ENCODE measurements at regions of chr19 and their contacts with region 1.

Region 1: DNA sequence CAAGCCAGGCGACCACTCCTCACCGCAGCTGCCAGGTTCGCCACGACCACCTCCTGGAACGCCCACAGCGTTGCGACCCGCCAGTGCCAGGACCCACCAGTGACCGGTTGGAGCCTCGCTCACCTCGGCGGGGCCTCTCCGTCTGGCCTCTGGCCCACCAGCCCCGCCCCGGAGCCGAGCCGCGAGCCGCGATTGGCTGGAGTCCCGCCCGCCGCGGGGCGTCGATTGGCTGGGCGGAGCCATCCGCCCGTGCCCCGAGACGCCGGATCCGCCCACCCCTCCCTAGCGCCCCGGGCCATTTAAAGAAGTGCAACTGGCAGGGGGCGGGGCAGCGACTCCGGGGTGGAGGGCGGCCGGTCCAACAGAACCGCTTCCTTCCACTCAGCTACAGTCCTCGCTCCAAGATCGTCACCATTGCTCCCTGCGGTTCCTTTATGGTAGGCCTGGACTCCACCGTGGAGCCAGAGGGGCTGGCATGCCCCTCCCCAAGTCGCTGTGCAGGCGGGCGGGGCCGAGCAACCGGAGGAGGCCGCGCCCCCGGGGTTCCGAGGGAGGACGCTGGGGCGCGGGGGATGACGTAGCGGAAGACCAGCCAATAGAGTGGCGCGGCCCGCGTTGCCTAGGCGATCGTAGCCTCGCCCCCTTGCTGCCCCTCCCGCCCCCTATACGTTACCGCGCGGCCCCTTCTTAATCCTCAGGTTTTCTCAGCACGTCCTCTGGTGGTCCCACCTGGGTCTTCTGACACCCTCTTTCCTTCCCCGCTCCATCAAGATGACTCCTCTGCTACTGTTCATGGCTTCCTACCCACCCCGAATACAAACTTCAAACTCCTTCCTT is at the start of gene SERTAD3:
- DNase-seq: peak; percentile 98
- ATAC-seq: peak; percentile 70
- H3K4me3 Mint-ChIP-seq: peak within 1 kb of the TSS; percentile 96
- H3K27ac Mint-ChIP-seq: peak within 1 kb of the TSS; percentile 96
- H3K4me1 Mint-ChIP-seq: peaks cover 16% of the 10 kb centered on the region
- H3K27me3 Mint-ChIP-seq: no peaks in the 10 kb centered on the region
- total RNA-seq, gene SERTAD3: 8.4 to 12.0 TPM

Region 2: GRCh38 chr19:39390755-39391592 is 1053.4 kb before region 1 on chr19 and contains the starts of genes MED29 and PAF1:
- CTCF ChIA-PET with region 1: no interaction called
- POLR2A ChIA-PET with region 1: no interaction called
- intact Hi-C with region 1: loop called in 1 of 2 experiments (anchors 2 kb)
- DNase-seq: peak; percentile 98
- ATAC-seq: peak; percentile 97
- H3K4me3 Mint-ChIP-seq: peak within 1 kb of the TSS; percentile 99
- H3K27ac Mint-ChIP-seq: peak within 1 kb of the TSS; percentile 98
- H3K4me1 Mint-ChIP-seq: peaks cover 28% of the 10 kb centered on the region
- H3K27me3 Mint-ChIP-seq: no peaks in the 10 kb centered on the region
- total RNA-seq, gene MED29: 24.0 to 34.6 TPM
- total RNA-seq, gene PAF1: 40.4 to 54.2 TPM

Region 3: DNA sequence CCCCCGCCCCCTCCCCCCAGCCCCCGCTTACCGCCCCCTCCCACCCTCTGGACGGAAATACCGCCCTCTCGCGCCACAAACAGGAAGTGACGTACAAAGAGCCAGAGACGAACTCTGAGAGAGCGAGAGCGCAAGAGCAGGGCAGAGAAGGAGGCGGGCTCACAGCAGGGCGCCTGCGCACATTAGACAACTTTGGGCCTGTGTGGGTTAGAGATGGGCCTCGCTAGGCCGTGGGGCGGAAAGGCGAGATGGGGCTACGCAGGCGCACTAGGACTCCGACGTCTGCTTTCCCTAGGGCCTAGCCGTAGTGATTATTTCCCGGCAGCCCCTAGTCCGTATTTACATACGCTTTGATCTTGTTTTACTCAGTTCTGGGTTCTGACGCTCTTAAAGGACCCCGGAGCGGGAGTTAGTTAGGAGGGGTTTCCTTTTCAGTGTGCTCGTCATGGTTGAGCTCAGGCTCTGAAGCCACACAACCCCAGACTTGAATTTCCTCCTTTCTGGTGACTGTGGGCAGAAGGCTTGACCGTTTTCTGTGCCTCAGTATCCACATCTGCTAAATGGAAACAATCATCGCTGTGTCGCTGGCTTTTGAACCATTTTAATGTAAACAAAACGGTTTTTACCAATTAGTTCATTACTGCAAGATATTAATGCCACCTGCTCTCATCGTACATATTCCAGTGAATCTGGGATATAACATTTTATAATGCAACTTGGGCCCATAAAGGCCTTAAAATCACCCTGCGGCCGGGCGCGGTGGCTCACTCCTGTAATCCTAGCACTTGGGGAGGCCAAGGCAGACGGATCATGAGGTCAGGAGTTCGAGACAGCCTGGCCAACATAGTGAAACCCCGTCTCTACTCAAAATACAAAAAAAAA is 158.8 kb before region 1 on chr19:
- CTCF ChIA-PET with region 1: interaction called, 3 read pairs
- POLR2A ChIA-PET with region 1: interaction called, 5 read pairs
- intact Hi-C with region 1: loop called (anchors 1 kb)
- DNase-seq: peak; percentile 98
- ATAC-seq: peak; percentile 89
- H3K4me3 Mint-ChIP-seq: peak overlapping the region; percentile 95
- H3K27ac Mint-ChIP-seq: peak overlapping the region; percentile 99
- H3K4me1 Mint-ChIP-seq: peaks cover 42% of the 10 kb centered on the region
- H3K27me3 Mint-ChIP-seq: no peaks in the 10 kb centered on the region

Region 4: GRCh38 chr19:40341601-40342482 is 102.6 kb before region 1 on chr19:
- CTCF ChIA-PET with region 1: no interaction called
- POLR2A ChIA-PET with region 1: no interaction called
- intact Hi-C with region 1: no loop called
- DNase-seq: no peak
- ATAC-seq: no peak
- H3K4me3 Mint-ChIP-seq: no peak overlapping the region
- H3K27ac Mint-ChIP-seq: no peak overlapping the region
- H3K4me1 Mint-ChIP-seq: peaks cover 3% of the 10 kb centered on the region
- H3K27me3 Mint-ChIP-seq: no peaks in the 10 kb centered on the region

Region 5: GRCh38 chr19:40433391-40434216 is 10.8 kb before region 1 on chr19:
- CTCF ChIA-PET with region 1: interaction called, 8 read pairs
- POLR2A ChIA-PET with region 1: interaction called, 8 read pairs
- intact Hi-C with region 1: loop called in 1 of 2 experiments (anchors 1 kb)
- DNase-seq: peak; percentile 74
- ATAC-seq: peak; percentile 86
- H3K4me3 Mint-ChIP-seq: peak overlapping the region; percentile 75
- H3K27ac Mint-ChIP-seq: peak overlapping the region; percentile 96
- H3K4me1 Mint-ChIP-seq: peaks cover 15% of the 10 kb centered on the region
- H3K27me3 Mint-ChIP-seq: no peaks in the 10 kb centered on the region

Region 6: DNA sequence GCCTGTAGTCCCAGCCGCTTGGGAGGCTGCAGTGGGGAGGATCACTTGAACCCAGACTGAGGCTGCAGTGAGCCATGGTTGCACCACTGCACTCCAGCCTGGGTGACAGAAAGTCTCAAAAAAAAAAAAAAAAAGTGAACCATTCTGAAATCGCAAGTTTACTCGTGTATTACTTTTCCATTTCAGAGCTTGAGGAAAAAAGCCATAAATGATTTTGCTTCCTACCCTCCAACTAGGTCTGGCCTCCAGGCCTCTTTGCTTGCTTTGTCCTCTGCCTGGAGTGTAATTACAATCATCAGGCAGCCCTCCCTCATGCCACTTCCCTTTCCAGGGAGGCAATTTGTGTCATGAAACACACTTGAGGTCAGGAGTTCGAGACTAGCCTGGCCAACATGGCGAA is 12.6 kb after region 1 on chr19:
- CTCF ChIA-PET with region 1: no interaction called
- POLR2A ChIA-PET with region 1: no interaction called
- intact Hi-C with region 1: no loop called
- DNase-seq: no peak
- ATAC-seq: no peak
- H3K4me3 Mint-ChIP-seq: no peak overlapping the region
- H3K27ac Mint-ChIP-seq: no peak overlapping the region
- H3K4me1 Mint-ChIP-seq: no peaks in the 10 kb centered on the region
- H3K27me3 Mint-ChIP-seq: no peaks in the 10 kb centered on the region

Region 7: DNA sequence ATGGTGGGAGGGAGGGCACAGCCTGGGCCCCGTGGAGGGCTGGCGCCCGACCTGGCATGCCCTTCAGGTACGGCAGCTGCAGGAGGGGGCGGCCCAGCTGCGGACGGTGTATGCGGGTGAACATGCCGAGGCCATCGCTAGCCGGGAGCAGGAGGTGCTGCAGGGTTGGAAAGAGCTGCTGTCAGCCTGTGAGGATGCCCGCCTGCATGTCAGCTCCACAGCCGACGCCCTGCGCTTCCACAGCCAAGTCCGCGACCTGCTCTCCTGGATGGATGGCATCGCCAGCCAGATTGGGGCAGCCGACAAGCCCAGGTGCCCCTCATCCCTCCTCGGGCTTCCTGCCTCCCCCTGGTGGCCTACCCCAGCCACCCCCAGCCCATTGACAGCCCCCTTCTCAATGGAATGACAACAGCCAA is 115.7 kb after region 1 on chr19:
- CTCF ChIA-PET with region 1: no interaction called
- POLR2A ChIA-PET with region 1: no interaction called
- intact Hi-C with region 1: no loop called
- DNase-seq: no peak
- ATAC-seq: no peak
- H3K4me3 Mint-ChIP-seq: no peak overlapping the region
- H3K27ac Mint-ChIP-seq: no peak overlapping the region
- H3K4me1 Mint-ChIP-seq: no peaks in the 10 kb centered on the region
- H3K27me3 Mint-ChIP-seq: peaks cover 22% of the 10 kb centered on the region

Region 8: GRCh38 chr19:40603389-40604135 is 159.2 kb after region 1 on chr19:
- CTCF ChIA-PET with region 1: interaction called, 3 read pairs
- POLR2A ChIA-PET with region 1: no interaction called
- intact Hi-C with region 1: loop called in 1 of 2 experiments (anchors 1 kb)
- DNase-seq: peak; percentile 99
- ATAC-seq: peak; percentile 80
- H3K4me3 Mint-ChIP-seq: peak overlapping the region; percentile 52
- H3K27ac Mint-ChIP-seq: no peak overlapping the region
- H3K4me1 Mint-ChIP-seq: peaks cover 66% of the 10 kb centered on the region
- H3K27me3 Mint-ChIP-seq: peaks cover 22% of the 10 kb centered on the region

Region 9: GRCh38 chr19:40716655-40717324 is 272.4 kb after region 1 on chr19 and contains the starts of genes COQ8B and ITPKC:
- CTCF ChIA-PET with region 1: no interaction called
- POLR2A ChIA-PET with region 1: no interaction called
- intact Hi-C with region 1: loop called in 1 of 2 experiments (anchors 5 kb)
- DNase-seq: peak; percentile 100
- ATAC-seq: peak; percentile 65
- H3K4me3 Mint-ChIP-seq: peak within 1 kb of the TSS; percentile 93
- H3K27ac Mint-ChIP-seq: peak within 1 kb of the TSS; percentile 98
- H3K4me1 Mint-ChIP-seq: peaks cover 59% of the 10 kb centered on the region
- H3K27me3 Mint-ChIP-seq: no peaks in the 10 kb centered on the region
- total RNA-seq, gene COQ8B: 21.2 to 29.9 TPM
- total RNA-seq, gene ITPKC: 4.6 to 5.6 TPM

Region 10: DNA sequence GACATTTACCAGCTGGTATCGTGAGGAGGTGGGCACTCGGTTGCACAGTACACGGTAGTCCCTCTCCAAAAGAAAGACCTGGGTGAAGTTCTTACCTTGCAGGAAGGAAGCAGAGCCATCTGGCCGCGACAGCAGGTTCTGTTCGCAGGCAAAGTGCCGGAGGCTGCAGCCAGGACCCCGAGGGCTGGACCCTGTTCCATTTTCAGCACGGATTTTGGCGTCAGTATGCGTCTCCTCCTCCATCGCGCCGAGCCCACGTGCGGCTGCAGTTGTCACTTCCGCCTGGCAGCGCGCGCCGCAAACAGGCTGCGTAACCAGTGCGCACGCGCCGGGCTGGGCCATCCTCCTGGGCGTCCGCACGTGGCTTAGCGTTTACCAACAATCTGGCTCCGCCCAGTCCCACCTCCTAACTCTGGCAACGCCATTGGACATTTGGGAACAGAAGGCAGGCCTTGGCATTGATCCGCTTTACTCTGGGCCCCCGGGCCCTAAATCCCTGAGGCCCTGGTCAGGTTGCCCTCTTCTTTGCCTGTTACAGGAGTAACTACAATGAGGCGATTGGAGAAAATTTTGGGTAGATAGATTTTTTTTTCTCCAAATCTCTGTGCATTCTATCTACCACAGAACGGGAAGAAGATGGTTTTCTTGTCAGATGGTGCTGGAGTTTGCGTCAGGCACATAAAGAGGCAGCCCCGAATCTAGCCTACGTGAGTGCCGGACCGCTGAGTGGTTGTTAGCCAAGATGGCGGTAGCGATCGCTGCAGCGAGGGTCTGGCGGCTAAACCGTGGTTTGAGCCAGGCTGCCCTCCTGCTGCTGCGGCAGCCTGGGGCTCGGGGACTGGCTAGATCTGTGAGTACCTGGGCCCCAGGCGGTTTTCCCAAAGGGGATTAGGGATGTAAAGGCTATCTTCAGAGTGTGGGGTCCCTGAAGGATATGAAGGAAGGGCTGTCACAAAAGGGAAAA is 953.0 kb after region 1 on chr19 and contains the starts of genes BCKDHA and EXOSC5:
- CTCF ChIA-PET with region 1: no interaction called
- POLR2A ChIA-PET with region 1: no interaction called
- intact Hi-C with region 1: loop called in 1 of 2 experiments (anchors 5 kb)
- DNase-seq: peak; percentile 99
- ATAC-seq: peak; percentile 100
- H3K4me3 Mint-ChIP-seq: peak within 1 kb of the TSS; percentile 97
- H3K27ac Mint-ChIP-seq: peak within 1 kb of the TSS; percentile 97
- H3K4me1 Mint-ChIP-seq: peaks cover 31% of the 10 kb centered on the region
- H3K27me3 Mint-ChIP-seq: no peaks in the 10 kb centered on the region
- total RNA-seq, gene BCKDHA: 14.5 to 25.4 TPM
- total RNA-seq, gene EXOSC5: 32.7 to 47.8 TPM